HCT116 (cell line): ENCODE measurements at regions of chr17 and their contacts with region 1.

Region 1: GRCh38 chr17:7351665-7352501 is at the start of gene KCTD11:
- DNase-seq: peak; percentile 79
- ATAC-seq: peak; percentile 76
- H3K4me3 ChIP-seq: peak within 1 kb of the TSS; percentile 79 to 89
- H3K27ac ChIP-seq: peak within 1 kb of the TSS; percentile 99
- H3K4me1 ChIP-seq: peaks cover 29 to 69% of the 10 kb centered on the region in 2 experiments
- H3K27me3 ChIP-seq: no peaks in the 10 kb centered on the region
- CTCF ChIP-seq: peak in 1 of 3 experiments; percentile 60; a peak in 2 of 6 replicates
- POLR2A ChIP-seq: peak; percentile 49
- RAD21 ChIP-seq: no peak
- total RNA-seq, gene KCTD11: 5.4 TPM

Region 2: GRCh38 chr17:7289256-7290032 is 62.4 kb before region 1 on chr17:
- CTCF ChIA-PET with region 1: no interaction called
- POLR2A ChIA-PET with region 1: no interaction called
- RAD21 ChIA-PET with region 1: no interaction called
- intact Hi-C with region 1: no loop called
- DNase-seq: no peak
- ATAC-seq: no peak
- H3K4me3 ChIP-seq: no peak overlapping the region
- H3K27ac ChIP-seq: no peak overlapping the region
- H3K4me1 ChIP-seq: peaks cover 4 to 15% of the 10 kb centered on the region in 2 experiments; a peak in 3 of 4 replicates
- H3K27me3 ChIP-seq: no peaks in the 10 kb centered on the region
- CTCF ChIP-seq: no peak
- POLR2A ChIP-seq: no peak
- RAD21 ChIP-seq: no peak

Region 3: DNA sequence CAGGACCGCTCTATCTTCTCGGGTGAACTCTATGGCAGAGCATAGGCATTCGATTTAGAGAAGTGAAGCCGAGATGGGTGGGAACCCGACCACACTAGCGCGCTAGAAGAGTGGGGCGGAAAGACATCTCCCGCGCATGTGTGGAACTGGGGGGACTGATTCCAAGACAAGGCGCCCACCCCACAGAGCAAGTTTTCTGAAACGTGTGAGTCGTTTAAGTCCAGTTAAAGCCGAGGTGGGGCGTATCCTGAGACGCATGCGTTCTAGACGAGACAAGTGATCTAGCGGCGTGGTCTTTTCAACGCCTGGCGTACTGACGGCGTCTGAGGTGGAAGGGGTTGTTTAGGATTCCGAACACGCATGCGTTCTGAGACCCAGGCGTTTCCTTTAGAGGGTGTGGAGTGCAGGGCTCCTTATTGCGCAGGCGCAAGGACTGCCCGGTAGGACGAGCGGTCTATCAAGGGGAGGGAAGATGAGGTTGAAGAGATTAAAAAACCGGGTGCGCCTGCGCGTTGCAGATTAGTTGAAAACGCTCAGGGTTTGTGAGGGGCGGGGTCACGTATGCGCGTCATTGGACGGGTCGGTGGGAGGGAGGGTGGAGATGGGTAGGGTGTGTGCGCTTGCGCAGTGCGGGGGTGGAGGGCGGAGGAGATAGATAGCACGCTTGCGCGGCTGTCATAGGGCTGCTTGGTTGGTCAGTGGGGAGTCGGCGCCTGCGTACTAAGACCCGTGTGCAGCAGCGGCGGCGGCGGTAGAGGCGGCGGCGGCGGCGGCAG is 44.8 kb before region 1 on chr17 and contains the start of gene EIF5A:
- CTCF ChIA-PET with region 1: no interaction called
- POLR2A ChIA-PET with region 1: no interaction called
- RAD21 ChIA-PET with region 1: no interaction called
- intact Hi-C with region 1: loop called (anchors 2 kb)
- DNase-seq: peak; percentile 100
- ATAC-seq: peak; percentile 80
- H3K4me3 ChIP-seq: peak within 1 kb of the TSS; percentile 90 to 99
- H3K27ac ChIP-seq: peak within 1 kb of the TSS; percentile 98
- H3K4me1 ChIP-seq: peaks cover 19 to 41% of the 10 kb centered on the region in 2 experiments
- H3K27me3 ChIP-seq: no peaks in the 10 kb centered on the region
- CTCF ChIP-seq: no peak
- POLR2A ChIP-seq: peak; percentile 79
- RAD21 ChIP-seq: no peak
- total RNA-seq, gene EIF5A: 1,139 TPM

Region 4: GRCh38 chr17:7394452-7395191 is 42.7 kb after region 1 on chr17 and contains the start of gene PLSCR3:
- CTCF ChIA-PET with region 1: no interaction called
- POLR2A ChIA-PET with region 1: no interaction called
- RAD21 ChIA-PET with region 1: no interaction called
- intact Hi-C with region 1: loop called (anchors 5 kb)
- DNase-seq: no peak
- ATAC-seq: peak; percentile 89
- H3K4me3 ChIP-seq: peak within 1 kb of the TSS; percentile 58 to 84
- H3K27ac ChIP-seq: peak within 1 kb of the TSS; percentile 93
- H3K4me1 ChIP-seq: peaks cover 7 to 25% of the 10 kb centered on the region in 2 experiments
- H3K27me3 ChIP-seq: no peaks in the 10 kb centered on the region
- CTCF ChIP-seq: peak in 2 of 3 experiments; percentile 41 to 47; a peak in 4 of 6 replicates
- POLR2A ChIP-seq: peak; percentile 74
- RAD21 ChIP-seq: no peak
- total RNA-seq, gene PLSCR3: 43.8 TPM